Transverse colon (tissue), 4 donors: ENCODE measurements at regions of chr1 and their contacts with region 1.

Region 1: DNA sequence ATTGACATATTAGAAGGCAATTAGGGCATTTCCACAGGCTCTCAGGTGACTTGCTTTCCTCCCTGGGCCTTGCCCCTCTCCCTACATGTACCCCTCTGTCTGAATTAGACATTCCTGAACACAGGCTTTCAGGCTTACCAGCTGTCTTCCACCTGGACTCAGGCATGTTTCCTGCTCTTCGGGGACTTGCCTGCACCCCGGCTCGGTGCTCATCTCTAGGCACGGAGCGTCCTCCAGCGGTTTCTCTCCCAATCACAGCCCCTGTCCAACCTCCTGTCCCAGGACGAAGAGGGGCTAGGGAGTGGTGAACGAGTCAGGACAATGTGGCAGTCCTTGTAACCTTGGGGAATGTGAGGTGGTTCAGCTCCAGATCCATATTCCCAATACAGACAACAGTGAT is 4.2 kb downstream of the PROK1 start:
- DNase-seq: no peak
- H3K4me3 ChIP-seq: no peak overlapping the region
- H3K27ac ChIP-seq: no peak overlapping the region
- H3K4me1 ChIP-seq: no peaks in the 10 kb centered on the region
- H3K27me3 ChIP-seq: peaks cover 20% of the 10 kb centered on the region
- CTCF ChIP-seq: no peak
- EP300 ChIP-seq: no peak
- POLR2A ChIP-seq: no peak

Region 2: DNA sequence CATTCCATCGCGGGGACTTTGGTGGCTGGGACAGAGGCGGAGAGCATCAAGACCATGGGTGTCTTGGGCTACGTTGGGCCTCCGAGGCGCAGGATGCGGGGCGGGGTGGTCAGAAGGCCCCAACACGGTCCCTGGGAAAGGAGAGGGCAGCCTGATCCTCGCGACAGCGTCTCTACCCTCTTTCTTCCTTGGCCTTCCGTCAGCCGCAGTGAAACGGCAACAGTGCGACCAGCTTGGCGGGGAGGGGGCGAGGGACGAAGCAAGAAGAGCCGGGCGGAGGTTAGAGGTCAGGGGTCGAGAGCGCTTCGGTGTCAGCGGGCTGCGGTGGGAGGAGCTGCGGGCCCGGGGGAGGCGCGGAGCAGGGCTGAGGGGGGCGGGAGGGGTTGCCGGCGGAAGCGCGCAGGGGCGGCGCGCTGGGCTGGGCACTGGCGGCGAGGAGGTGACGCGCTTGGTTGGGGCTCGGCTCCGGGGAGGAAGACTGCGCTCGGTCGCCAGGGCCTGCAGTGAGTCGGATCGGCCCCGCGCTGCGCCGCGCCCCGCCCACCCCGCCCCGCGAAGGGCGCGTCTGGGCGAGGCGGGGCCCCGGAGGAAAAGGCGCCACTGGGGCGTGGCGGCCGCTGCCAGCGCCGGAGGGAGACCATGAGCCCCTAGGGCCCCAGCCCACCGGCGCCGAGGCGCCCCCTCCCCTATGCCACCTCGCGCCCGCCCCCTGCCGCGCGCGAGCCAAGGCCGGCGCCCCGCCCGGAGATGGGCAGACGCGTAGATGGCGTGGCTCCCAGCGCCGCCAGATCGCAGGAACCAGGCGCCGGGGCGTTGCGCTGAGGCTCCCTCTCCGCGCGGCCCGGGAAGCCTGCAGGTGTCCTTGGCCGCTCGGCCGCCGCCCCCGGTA is 245.2 kb before region 1 on chr1 and contains the start of gene KCNC4:
- in situ Hi-C with region 1: loop called in 1 of 4 experiments (anchors 10 kb)
- intact Hi-C with region 1: no loop called
- DNase-seq: peak; percentile 93
- H3K4me3 ChIP-seq: peak within 1 kb of the TSS; percentile 48 to 90 (median 80)
- H3K27ac ChIP-seq: peak within 1 kb of the TSS; percentile 87 to 96 (median 92)
- H3K4me1 ChIP-seq: peaks cover 5 to 34% (median 14%) of the 10 kb centered on the region in 4 donors
- H3K27me3 ChIP-seq: peaks cover 7% of the 10 kb centered on the region
- CTCF ChIP-seq: no peak
- EP300 ChIP-seq: no peak
- POLR2A ChIP-seq: peak; percentile 8
- total RNA-seq, gene KCNC4: 1.8 to 25.8 (median 4.9) TPM